ENCODE measurements at regions of chr7 and their contacts with region 1.

Region 1: DNA sequence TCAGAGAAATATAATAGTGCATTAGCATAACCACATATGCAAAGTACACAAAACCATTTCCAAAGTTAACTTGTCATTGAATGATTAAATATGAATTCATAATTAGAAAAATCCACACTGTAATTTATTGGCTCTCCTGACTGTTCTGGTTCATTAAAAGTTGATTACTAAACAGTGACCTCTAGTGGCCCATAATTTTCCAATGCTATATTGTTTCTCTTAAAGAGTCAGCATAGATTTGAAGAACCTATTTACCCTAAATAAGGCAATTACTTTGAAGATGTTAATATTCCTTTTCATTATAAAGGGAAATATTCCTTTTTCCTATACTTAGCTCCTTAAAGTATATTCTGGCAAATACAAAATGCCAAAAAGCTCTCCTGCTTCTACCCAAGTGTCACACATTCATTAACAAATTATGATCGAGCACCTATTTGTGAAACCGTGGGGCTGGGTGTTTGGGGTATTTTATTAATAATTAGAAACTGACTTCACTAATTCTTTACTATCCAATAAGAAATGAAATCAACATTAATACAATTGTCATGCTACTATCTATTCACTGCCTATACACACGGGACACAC is 86.2 kb downstream of the HIBADH start:
- H3K4me3 Mint-ChIP-seq: no peak overlapping the region
- H3K27ac Mint-ChIP-seq: no peak overlapping the region
- H3K4me1 Mint-ChIP-seq: peaks cover 20% of the 10 kb centered on the region
- H3K27me3 Mint-ChIP-seq: peaks cover 10% of the 10 kb centered on the region

Region 2: DNA sequence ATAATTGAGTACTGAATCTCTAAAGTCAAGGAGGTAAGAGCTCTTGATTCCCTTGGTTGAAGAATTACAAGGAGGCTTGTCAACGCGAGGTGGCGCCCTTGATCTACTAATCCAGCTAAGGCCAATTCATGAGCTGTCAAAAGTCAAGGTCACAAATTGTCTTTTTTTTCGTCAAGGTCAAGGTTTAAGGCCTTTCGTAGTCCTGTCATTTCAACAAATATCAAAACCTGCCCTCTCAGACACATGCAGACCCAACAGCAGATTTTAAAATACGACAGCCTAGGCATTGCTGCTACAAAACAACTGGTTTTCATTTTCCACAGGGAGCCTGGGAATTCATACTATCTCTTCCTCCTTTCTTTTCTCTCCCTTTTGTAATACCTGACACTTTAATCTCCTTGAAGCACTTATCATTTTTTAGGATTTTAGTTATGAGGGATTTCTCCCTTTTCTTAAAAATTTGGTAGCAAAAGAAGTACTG is 380.1 kb before region 1 on chr7:
- intact Hi-C with region 1: loop called (anchors 1 kb)
- H3K4me3 Mint-ChIP-seq: no peak overlapping the region
- H3K27ac Mint-ChIP-seq: no peak overlapping the region
- H3K4me1 Mint-ChIP-seq: peaks cover 48% of the 10 kb centered on the region
- H3K27me3 Mint-ChIP-seq: peaks cover 81% of the 10 kb centered on the region

Region 3: GRCh38 chr7:27210441-27211083 is 365.9 kb before region 1 on chr7:
- intact Hi-C with region 1: loop called (anchors 1 kb)
- H3K4me3 Mint-ChIP-seq: peak overlapping the region; percentile 67
- H3K27ac Mint-ChIP-seq: no peak overlapping the region
- H3K4me1 Mint-ChIP-seq: peaks cover 28% of the 10 kb centered on the region
- H3K27me3 Mint-ChIP-seq: peaks cover 100% of the 10 kb centered on the region

Region 4: GRCh38 chr7:27235387-27236311 is 340.8 kb before region 1 on chr7:
- intact Hi-C with region 1: loop called (anchors 2 kb)
- H3K4me3 Mint-ChIP-seq: peak overlapping the region; percentile 74
- H3K27ac Mint-ChIP-seq: no peak overlapping the region
- H3K4me1 Mint-ChIP-seq: peaks cover 31% of the 10 kb centered on the region
- H3K27me3 Mint-ChIP-seq: peaks cover 84% of the 10 kb centered on the region

Region 5: DNA sequence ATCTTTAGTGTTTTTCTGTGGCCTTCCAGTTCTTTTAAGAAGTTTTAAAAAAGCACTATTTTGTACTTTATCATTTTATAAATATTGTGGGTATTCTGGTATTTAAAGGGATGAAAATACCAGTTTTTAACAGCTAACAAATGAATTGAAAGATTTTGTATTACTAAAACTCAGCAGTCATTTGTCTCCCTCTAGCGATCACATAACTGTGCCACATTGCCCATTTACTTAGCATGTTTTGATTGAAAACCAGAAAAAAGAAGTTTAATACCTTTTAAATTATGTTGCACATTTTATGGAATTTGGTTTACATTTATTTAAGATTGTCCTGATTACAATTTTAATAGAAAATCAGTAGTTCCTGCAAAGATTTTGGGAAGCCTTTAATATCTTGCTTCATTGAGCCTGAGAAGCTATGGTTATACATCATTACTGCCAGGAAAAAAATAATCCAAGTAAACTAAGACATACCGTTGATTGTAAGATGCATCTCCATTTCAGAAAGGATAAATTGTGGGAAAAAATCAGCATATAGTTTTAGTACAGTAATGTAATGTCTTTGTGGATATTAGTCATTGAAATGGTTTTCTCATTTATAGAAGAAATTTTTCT is 198.4 kb after region 1 on chr7:
- intact Hi-C with region 1: loop called (anchors 10 kb)
- H3K4me3 Mint-ChIP-seq: no peak overlapping the region
- H3K27ac Mint-ChIP-seq: no peak overlapping the region
- H3K4me1 Mint-ChIP-seq: no peaks in the 10 kb centered on the region
- H3K27me3 Mint-ChIP-seq: no peaks in the 10 kb centered on the region

Measured in dendritic cell treated with granulocyte-macrophage colony-stimulating factor and Interleukin-4, amounts not matched to agents 40 ng/mL and 50 ng/mL, for 4 days (primary cell).